Activated naive CD4-positive, alpha-beta T cell treated with anti-CD3 and anti-CD28 coated beads for 36 hours (primary cell): ENCODE measurements at regions of chr7 and their contacts with region 1.

Region 1: DNA sequence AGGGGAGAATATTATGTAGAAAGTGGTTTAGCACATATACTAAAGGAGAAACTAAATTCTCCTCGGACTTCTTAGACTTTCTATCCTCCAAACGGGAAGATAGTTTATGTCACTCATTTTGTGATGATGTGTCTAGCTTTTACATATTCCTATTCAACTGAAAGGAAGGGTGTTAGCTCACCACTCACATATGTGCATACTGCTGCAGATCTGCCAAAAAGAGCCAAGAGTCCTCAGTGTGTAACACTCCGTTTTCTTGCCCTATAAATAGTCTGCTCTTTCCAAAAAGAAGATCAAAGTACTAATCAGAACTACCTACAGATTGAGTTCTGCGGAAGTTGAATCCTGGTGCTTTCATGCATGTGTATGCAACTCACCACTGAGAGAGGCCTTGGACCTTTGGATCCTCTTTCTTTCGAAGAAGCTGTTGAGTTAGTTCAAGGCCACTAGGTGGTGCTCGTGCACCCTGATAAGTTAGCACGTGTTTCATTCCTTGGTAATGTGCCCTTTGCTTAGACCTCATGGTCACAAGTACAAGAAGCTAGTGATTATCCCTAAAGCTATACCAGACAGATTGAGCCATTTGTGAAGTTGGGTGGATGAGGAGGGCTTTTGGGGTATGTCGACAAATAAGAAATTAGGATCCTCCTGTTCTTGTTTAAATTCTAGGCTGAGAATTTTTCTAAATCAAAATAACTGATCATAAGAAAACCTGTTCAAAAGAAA is 14.1 kb downstream of the YAE1 start:
- DNase-seq: peak; percentile 89
- H3K4me3 Mint-ChIP-seq: no peak overlapping the region
- H3K27ac Mint-ChIP-seq: no peak overlapping the region
- H3K4me1 Mint-ChIP-seq: peaks cover 11% of the 10 kb centered on the region
- H3K27me3 Mint-ChIP-seq: no peaks in the 10 kb centered on the region

Region 2: DNA sequence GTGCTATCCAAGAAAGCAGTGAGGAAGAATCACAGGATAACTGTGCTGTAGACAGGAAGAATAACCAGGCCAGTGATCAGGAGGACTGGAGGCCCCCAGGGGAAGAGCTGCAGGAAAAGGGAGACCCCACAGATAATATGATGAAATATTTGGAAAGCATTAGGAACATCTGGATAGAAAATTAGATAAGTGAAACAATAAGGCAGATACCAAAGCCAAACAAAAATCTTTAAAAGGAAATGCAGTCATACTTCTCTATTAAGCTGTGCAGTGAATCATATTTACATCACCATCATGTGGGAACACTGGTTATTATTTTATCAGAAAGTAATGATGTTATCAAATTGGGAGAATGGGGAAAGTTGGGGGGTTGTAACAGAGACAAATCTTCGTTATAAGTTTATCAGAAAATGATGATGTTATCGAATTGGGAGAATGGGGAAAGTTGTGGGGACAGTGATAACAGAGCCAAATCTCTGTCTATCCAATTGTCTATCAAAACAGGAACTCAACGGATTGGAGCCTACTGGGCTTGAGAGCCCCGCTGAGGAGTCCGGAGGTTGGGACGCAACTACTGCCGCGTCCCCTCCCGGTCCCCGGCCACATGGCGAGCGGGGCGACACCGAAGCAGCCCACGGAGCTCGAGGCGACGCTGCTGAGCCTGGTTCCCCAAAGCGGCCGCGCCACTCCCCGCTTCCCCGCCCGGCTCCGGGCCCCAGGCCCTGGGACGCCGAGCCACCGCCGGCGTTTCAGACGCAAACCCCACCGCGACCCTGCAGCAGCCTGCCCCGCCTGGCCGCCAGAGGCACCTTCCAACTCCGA is 29.0 kb after region 1 on chr7:
- CTCF ChIA-PET with region 1: interaction called, 12 read pairs
- intact Hi-C with region 1: no loop called
- DNase-seq: peak; percentile 20
- H3K4me3 Mint-ChIP-seq: peak overlapping the region; percentile 55
- H3K27ac Mint-ChIP-seq: peak overlapping the region; percentile 39
- H3K4me1 Mint-ChIP-seq: peaks cover 48% of the 10 kb centered on the region
- H3K27me3 Mint-ChIP-seq: peaks cover 3% of the 10 kb centered on the region

Region 3: DNA sequence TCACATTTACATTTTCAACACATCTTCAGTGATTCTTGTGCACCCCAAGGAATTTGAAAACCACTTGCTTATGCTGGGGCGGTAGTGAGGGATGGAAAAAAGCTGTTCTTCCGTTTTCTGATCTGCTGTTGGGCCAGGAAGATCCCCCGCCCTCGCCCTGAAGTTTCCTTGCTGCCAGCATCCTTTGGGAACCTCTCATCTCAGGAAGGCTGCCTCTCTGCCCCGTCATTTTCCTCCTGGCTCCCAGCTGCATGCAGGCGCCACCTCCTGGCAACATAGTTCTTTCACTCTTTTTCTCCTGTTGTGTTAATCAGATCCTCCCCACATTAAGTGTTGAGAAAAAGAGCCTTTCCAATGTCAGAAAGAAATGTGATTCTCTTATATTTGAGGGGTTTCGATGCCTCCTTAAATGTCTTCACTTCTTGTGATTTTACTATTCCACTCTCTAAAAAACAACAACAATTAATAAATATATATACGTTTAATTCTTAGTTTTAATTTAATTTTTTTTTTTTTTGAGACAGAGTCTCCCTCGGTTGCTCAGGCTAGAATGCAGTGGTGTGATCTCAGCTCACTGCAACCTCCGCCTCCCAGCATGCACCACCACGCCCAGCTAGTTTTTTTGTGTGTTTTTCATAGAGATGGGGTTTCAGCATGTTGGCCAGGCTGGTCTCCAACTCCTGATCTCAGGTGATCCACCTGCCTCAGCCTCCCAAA is 165.9 kb after region 1 on chr7:
- CTCF ChIA-PET with region 1: interaction called, 364 read pairs
- intact Hi-C with region 1: loop called (anchors 1 kb)
- DNase-seq: peak; percentile 76
- H3K4me3 Mint-ChIP-seq: no peak overlapping the region
- H3K27ac Mint-ChIP-seq: no peak overlapping the region
- H3K4me1 Mint-ChIP-seq: peaks cover 18% of the 10 kb centered on the region
- H3K27me3 Mint-ChIP-seq: no peaks in the 10 kb centered on the region

Region 4: DNA sequence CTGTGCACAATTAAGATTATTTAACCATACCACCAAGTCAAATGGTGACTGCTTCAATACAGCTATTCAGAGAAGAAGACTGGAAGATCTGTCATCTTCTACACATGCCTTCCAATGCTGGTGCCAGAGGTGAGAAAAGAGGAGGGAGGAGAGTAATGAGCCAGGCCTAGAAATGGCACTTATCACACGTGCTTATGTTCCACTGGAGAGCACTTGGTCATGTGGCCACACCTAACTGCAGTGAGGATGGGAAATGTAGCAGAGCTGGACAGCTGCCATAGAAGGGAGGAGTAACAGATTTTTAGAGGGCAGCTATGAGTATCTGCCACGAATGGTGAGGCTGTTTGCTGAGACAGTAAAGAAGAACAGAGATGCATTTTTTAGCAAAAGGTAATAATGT is 477.0 kb after region 1 on chr7:
- CTCF ChIA-PET with region 1: interaction called, 6 read pairs
- intact Hi-C with region 1: loop called (anchors 1 kb)
- DNase-seq: no peak
- H3K4me3 Mint-ChIP-seq: no peak overlapping the region
- H3K27ac Mint-ChIP-seq: no peak overlapping the region
- H3K4me1 Mint-ChIP-seq: peaks cover 4% of the 10 kb centered on the region
- H3K27me3 Mint-ChIP-seq: no peaks in the 10 kb centered on the region